Activated T-helper 1 cell treated with anti-CD3 and anti-CD28 coated beads, Interleukin-12 subunit alpha, Interleukin-12 subunit beta, Interleukin-2, Interleukin-4 antibody, amounts not matched to agents 30 ng/mL and 10 ng/mL and 1 ng/mL, durations not matched to agents 14 hours and 24 hours and 36 hours (primary cell): ENCODE measurements at regions of chr7 and their contacts with region 1.

Region 1: DNA sequence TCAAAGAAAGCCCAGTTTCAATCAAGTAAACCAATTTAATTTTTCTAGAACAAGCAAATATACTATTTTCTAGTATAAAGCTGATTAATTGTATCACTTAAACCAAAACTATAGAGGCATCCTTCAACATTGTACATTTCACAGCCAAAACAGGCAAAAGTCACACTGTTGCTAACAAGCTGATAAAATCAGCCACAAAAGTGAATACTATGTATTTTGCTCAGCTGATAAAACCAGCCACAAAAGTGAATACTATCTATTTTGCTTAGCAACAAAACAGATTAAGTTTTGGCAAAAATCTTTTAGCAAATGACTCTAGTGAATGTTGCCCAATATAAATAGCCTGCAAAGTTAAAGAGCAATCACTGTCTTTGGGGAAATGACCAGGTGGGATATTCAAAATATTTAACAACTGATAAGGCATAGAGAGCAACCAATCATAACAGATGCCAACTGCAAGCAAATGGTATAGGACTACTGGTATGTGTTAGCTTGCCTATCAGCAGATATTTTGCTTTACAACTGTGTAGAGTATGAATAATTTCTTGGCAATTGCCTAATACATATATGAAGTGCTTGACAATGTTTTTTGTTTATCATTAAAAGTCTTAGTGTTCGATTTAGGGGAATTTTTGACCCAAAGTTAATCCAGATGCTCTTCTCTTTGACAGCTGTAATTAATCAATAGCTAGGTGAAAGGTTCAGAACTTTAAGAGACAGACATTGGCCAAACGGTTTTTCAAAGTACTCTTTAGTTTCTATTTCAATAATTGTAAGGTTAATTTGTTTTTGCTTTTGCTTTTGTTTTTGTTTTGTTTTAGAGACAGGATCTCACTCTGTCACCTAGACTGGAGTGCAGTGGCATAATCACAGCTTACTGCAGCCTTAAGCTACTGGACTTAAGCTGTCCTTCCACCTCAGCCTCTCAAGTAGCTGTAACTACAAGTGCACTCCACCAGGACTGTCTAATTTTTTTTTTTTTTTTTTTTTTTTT is 44.4 kb upstream of the SP4 start:
- DNase-seq: no peak
- H3K4me3 Mint-ChIP-seq: peak overlapping the region; percentile 60
- H3K27ac Mint-ChIP-seq: peak overlapping the region; percentile 46
- H3K4me1 Mint-ChIP-seq: peaks cover 43% of the 10 kb centered on the region
- H3K27me3 Mint-ChIP-seq: no peaks in the 10 kb centered on the region

Region 2: DNA sequence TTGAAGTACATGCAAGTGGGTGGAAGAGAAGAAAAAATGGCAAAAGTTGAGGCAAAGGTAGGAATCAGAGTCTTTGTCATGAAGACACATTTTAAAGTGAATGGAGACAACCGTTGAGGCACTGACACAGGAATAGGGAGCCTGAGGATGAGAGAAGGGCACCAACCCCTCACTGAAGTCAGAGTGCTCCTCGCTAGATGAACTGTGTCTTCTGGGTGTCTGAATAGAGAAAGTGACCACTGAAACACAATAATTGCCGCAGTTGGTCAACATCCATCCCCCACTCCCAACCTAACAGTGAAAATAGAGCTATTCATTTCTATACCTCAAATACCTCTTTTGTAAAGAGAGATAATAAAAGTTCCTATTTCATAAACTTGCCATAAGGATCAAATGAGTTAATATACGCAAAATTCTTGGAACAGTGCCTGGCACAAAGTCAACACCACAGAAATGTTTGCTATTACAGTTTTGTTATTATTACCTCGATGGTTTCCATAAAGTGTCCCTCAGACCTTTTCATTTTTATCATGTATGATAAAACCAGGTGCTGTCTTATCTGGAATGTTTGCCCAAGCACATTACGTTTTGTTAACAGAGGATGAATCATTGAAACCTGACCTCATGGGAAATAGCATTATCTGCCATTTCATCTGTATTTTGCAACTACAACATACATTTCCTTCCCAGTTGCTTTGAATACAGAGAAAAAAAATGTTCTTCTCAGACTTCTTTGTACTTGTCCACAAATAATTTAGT is 17.5 kb before region 1 on chr7:
- intact Hi-C with region 1: loop called (anchors 1 kb)
- DNase-seq: no peak
- H3K4me3 Mint-ChIP-seq: peak overlapping the region; percentile 9
- H3K27ac Mint-ChIP-seq: peak overlapping the region; percentile 25
- H3K4me1 Mint-ChIP-seq: peaks cover 70% of the 10 kb centered on the region
- H3K27me3 Mint-ChIP-seq: no peaks in the 10 kb centered on the region